CD4-positive, alpha-beta T cell (primary cell): ENCODE measurements at regions of chr19 and their contacts with region 1.

Region 1: DNA sequence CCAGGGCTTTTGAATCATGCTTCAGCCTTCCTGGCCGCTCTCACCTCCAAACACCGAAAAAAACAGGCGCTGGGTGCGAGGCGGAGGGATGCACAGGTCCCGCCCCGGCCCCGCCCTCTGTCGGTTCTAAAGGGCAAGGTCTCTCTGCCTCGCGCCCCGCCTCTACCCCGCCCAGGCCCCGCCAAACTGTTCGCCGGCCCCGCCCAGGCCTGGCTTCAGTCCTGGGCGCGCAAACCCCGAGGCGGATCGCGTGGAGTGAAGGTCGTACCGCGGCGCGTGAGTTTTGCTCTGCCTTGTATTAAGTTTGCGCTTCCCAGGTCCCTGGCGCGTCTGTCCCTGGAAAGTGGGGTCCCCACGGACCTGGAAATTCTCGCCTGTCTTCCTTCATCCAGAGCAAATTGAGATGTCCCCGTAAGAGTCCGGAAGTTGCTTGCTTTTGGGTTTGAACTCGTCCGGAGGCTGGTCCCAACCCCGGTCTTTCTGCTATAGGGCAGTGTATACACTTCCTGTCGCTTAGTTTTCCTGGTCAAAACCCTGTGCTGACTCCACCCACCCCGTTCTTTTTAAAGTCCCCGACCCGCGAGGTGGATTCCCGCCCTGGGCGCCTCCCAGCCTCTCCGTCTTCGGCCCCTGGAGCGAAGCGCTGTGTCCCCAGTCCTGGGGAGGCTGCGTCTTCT is 8.4 kb downstream of the ZNF808 start:
- DNase-seq: peak; percentile 80 to 95 (median 90)
- ATAC-seq: peak; percentile 95
- H3K4me3 ChIP-seq: peak overlapping the region; percentile 90
- H3K4me3 Mint-ChIP-seq: peak overlapping the region; percentile 91
- H3K27ac ChIP-seq: peak overlapping the region; percentile 49 to 76
- H3K27ac Mint-ChIP-seq: peak overlapping the region; percentile 69
- H3K4me1 ChIP-seq: peaks cover 23% of the 10 kb centered on the region
- H3K4me1 Mint-ChIP-seq: peaks cover 23% of the 10 kb centered on the region
- H3K27me3 ChIP-seq: no peaks in the 10 kb centered on the region
- H3K27me3 Mint-ChIP-seq: no peaks in the 10 kb centered on the region
- CTCF ChIP-seq: no peak

Region 2: GRCh38 chr19:52269338-52270261 is 266.3 kb before region 1 on chr19 and contains the start of gene ZNF766:
- CTCF ChIA-PET with region 1: no interaction called
- POLR2A ChIA-PET with region 1: no interaction called
- intact Hi-C with region 1: loop called in 1 of 2 experiments (anchors 10 kb)
- DNase-seq: peak; percentile 93 to 99 (median 97)
- ATAC-seq: peak; percentile 98
- H3K4me3 ChIP-seq: peak within 1 kb of the TSS; percentile 100
- H3K4me3 Mint-ChIP-seq: peak within 1 kb of the TSS; percentile 97
- H3K27ac ChIP-seq: peak within 1 kb of the TSS; percentile 95 to 97
- H3K27ac Mint-ChIP-seq: peak within 1 kb of the TSS; percentile 90
- H3K4me1 ChIP-seq: peaks cover 38% of the 10 kb centered on the region
- H3K4me1 Mint-ChIP-seq: peaks cover 46% of the 10 kb centered on the region
- H3K27me3 ChIP-seq: no peaks in the 10 kb centered on the region
- H3K27me3 Mint-ChIP-seq: no peaks in the 10 kb centered on the region
- CTCF ChIP-seq: no peak
- total RNA-seq, gene ZNF766: 39.3 to 43.2 TPM

Region 3: GRCh38 chr19:52409941-52410675 is 125.8 kb before region 1 on chr19:
- CTCF ChIA-PET with region 1: no interaction called
- POLR2A ChIA-PET with region 1: no interaction called
- intact Hi-C with region 1: no loop called
- DNase-seq: no peak
- ATAC-seq: no peak
- H3K4me3 ChIP-seq: no peak overlapping the region
- H3K4me3 Mint-ChIP-seq: no peak overlapping the region
- H3K27ac ChIP-seq: no peak overlapping the region
- H3K27ac Mint-ChIP-seq: no peak overlapping the region
- H3K4me1 ChIP-seq: no peaks in the 10 kb centered on the region
- H3K4me1 Mint-ChIP-seq: no peaks in the 10 kb centered on the region
- H3K27me3 ChIP-seq: no peaks in the 10 kb centered on the region
- H3K27me3 Mint-ChIP-seq: no peaks in the 10 kb centered on the region
- CTCF ChIP-seq: no peak

Region 4: DNA sequence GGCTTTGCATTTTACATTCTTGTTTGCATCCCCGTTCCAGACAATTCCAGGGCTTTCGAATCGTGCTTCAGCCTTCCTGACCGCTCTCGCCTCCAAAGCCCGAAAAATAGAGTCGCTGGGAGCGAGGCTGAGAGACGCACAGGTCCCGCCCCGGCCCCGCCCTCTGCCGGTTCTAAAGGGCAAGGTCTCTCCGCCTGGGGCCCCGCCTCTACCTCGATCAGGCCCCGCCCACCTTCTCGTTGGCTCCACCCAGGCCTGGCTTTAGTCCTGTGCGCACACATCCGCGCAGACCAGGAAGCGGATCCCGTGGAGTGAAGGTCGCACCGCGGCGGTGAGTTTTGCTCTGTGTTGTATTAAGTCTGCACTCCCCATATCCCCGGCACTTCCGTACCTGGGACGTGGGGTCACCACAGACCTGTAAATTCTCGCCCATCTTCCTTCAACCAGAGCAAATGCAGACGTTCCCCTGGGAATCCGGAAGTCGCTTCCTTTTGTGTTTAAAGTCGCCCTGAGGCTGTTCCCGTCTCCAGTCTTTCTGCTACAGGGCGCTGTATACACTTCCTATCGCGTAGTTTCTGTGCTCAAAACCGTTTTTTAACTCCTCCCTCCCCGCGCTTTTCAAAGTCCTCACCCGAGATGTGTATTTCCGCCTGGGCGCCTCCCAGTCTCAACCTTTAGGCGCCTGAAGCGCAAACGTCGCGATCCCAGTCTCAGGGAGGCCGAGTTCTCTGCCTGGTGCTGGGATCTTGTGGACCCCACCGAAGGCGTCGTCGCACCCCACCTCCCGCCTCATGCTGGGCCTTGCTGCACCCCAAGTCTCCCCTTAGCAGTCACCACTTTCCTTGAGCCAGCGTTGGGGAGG is 34.3 kb after region 1 on chr19 and contains the start of gene ZNF701:
- CTCF ChIA-PET with region 1: no interaction called
- POLR2A ChIA-PET with region 1: no interaction called
- intact Hi-C with region 1: loop called (anchors 1 kb)
- DNase-seq: peak; percentile 92 to 98 (median 95)
- ATAC-seq: peak; percentile 97
- H3K4me3 ChIP-seq: peak within 1 kb of the TSS; percentile 93
- H3K4me3 Mint-ChIP-seq: peak within 1 kb of the TSS; percentile 87
- H3K27ac ChIP-seq: peak within 1 kb of the TSS; percentile 77 to 87
- H3K27ac Mint-ChIP-seq: peak within 1 kb of the TSS; percentile 84
- H3K4me1 ChIP-seq: peaks cover 20% of the 10 kb centered on the region
- H3K4me1 Mint-ChIP-seq: peaks cover 37% of the 10 kb centered on the region
- H3K27me3 ChIP-seq: no peaks in the 10 kb centered on the region
- H3K27me3 Mint-ChIP-seq: no peaks in the 10 kb centered on the region
- CTCF ChIP-seq: peak; percentile 36
- total RNA-seq, gene ZNF701: 7.9 to 8.2 TPM

Region 5: GRCh38 chr19:52601025-52601973 is 65.4 kb after region 1 on chr19:
- CTCF ChIA-PET with region 1: no interaction called
- POLR2A ChIA-PET with region 1: no interaction called
- intact Hi-C with region 1: loop called in 1 of 2 experiments (anchors 2 kb)
- DNase-seq: peak; percentile 87 to 97 (median 93)
- ATAC-seq: peak; percentile 99
- H3K4me3 ChIP-seq: peak overlapping the region; percentile 94
- H3K4me3 Mint-ChIP-seq: peak overlapping the region; percentile 89
- H3K27ac ChIP-seq: peak overlapping the region; percentile 35 to 68
- H3K27ac Mint-ChIP-seq: peak overlapping the region; percentile 86
- H3K4me1 ChIP-seq: peaks cover 26% of the 10 kb centered on the region
- H3K4me1 Mint-ChIP-seq: peaks cover 45% of the 10 kb centered on the region
- H3K27me3 ChIP-seq: no peaks in the 10 kb centered on the region
- H3K27me3 Mint-ChIP-seq: no peaks in the 10 kb centered on the region
- CTCF ChIP-seq: peak; percentile 66